Activated B cell treated with CpG ODN at 0.5 μM for 24 hours (primary cell): ENCODE measurements at regions of chr9 and their contacts with region 1.

Region 1: DNA sequence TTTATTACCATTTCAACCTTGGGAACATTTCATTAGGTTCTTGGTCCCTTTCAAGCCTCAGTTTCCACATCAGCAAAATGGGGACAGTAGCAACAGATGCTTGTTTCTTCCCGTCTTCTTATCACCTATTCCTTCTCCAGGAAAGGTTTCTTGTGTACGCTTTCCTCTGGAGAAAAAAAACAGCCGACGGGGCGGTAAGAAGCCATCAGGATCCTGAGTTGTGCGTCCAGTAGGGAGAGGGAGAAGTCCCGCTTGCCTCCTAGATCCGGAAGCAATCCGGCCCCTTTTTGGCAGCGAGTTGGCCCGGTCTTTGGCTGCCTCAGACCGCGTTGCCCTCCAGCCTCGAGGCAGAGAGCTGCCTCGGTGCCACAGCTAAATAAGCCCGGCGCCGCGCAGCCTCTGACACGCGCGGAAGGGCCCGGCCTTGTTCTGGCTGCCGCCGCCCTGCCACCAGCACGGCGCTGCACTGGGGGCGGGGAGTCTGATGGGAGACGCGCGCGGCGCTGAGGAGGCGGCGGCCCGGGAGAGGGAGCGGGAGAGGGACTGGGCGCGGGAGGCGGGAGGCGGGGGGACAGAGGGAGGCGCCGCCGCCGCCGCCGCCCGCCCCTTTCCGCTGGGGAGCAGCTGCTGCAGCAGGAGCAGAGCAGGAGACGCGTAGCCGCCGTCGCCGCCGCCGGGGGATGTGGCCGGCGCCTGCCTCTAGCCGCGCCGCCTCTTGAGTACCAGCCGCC is at the start of gene SLC44A1:
- DNase-seq: peak; percentile 86
- ATAC-seq: peak; percentile 82
- H3K4me3 Mint-ChIP-seq: peak within 1 kb of the TSS; percentile 92
- H3K27ac Mint-ChIP-seq: peak within 1 kb of the TSS; percentile 84
- H3K4me1 Mint-ChIP-seq: peaks cover 29% of the 10 kb centered on the region
- H3K27me3 Mint-ChIP-seq: peaks cover 8% of the 10 kb centered on the region
- CTCF ChIP-seq: no peak
- total RNA-seq, gene SLC44A1: 9.5 and 10.1 TPM in 2 replicates

Region 2: DNA sequence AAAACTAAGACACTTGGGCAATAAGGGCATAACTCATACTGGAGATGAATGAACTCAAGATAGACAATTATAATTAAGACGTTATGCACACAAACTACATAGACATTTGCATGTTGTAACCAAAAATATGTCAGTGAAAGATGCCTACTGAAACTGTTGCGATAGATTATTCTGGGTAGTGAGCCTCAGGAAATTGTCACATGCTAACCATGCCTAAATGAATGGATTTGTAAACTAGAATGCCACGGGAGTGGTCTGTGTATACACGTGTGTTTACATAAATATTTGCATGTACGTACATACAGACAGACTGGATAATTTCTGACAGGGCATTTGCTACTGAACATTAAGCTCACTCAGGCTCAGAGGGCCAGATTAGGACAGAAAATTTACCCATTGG is 479.0 kb before region 1 on chr9:
- CTCF ChIA-PET with region 1: no interaction called
- POLR2A ChIA-PET with region 1: no interaction called
- intact Hi-C with region 1: loop called (anchors 5 kb)
- DNase-seq: no peak
- ATAC-seq: peak; percentile 8
- H3K4me3 Mint-ChIP-seq: peak overlapping the region; percentile 90
- H3K27ac Mint-ChIP-seq: peak overlapping the region; percentile 90
- H3K4me1 Mint-ChIP-seq: peaks cover 44% of the 10 kb centered on the region
- H3K27me3 Mint-ChIP-seq: no peaks in the 10 kb centered on the region
- CTCF ChIP-seq: no peak

Region 3: GRCh38 chr9:104863180-104863883 is 380.8 kb before region 1 on chr9:
- CTCF ChIA-PET with region 1: interaction called, 4 read pairs
- POLR2A ChIA-PET with region 1: no interaction called
- intact Hi-C with region 1: loop called (anchors 5 kb)
- DNase-seq: no peak
- ATAC-seq: peak; percentile 74
- H3K4me3 Mint-ChIP-seq: no peak overlapping the region
- H3K27ac Mint-ChIP-seq: no peak overlapping the region
- H3K4me1 Mint-ChIP-seq: peaks cover 53% of the 10 kb centered on the region
- H3K27me3 Mint-ChIP-seq: no peaks in the 10 kb centered on the region
- CTCF ChIP-seq: no peak

Region 4: GRCh38 chr9:104968025-104968982 is 275.9 kb before region 1 on chr9:
- CTCF ChIA-PET with region 1: no interaction called
- POLR2A ChIA-PET with region 1: interaction called, 3 read pairs
- intact Hi-C with region 1: loop called (anchors 1 kb)
- DNase-seq: peak; percentile 91
- ATAC-seq: peak; percentile 99
- H3K4me3 Mint-ChIP-seq: peak overlapping the region; percentile 94
- H3K27ac Mint-ChIP-seq: peak overlapping the region; percentile 20
- H3K4me1 Mint-ChIP-seq: peaks cover 10% of the 10 kb centered on the region
- H3K27me3 Mint-ChIP-seq: peaks cover 15% of the 10 kb centered on the region
- CTCF ChIP-seq: no peak

Region 5: GRCh38 chr9:104982543-104982942 is 261.6 kb before region 1 on chr9:
- CTCF ChIA-PET with region 1: no interaction called
- POLR2A ChIA-PET with region 1: no interaction called
- intact Hi-C with region 1: no loop called
- DNase-seq: no peak
- ATAC-seq: no peak
- H3K4me3 Mint-ChIP-seq: no peak overlapping the region
- H3K27ac Mint-ChIP-seq: no peak overlapping the region
- H3K4me1 Mint-ChIP-seq: peaks cover 4% of the 10 kb centered on the region
- H3K27me3 Mint-ChIP-seq: no peaks in the 10 kb centered on the region
- CTCF ChIP-seq: no peak

Region 6: GRCh38 chr9:105318729-105319191 is 74.6 kb after region 1 on chr9:
- CTCF ChIA-PET with region 1: no interaction called
- POLR2A ChIA-PET with region 1: interaction called, 3 read pairs
- intact Hi-C with region 1: loop called (anchors 5 kb)
- DNase-seq: no peak
- ATAC-seq: peak; percentile 50
- H3K4me3 Mint-ChIP-seq: no peak overlapping the region
- H3K27ac Mint-ChIP-seq: no peak overlapping the region
- H3K4me1 Mint-ChIP-seq: peaks cover 12% of the 10 kb centered on the region
- H3K27me3 Mint-ChIP-seq: no peaks in the 10 kb centered on the region
- CTCF ChIP-seq: no peak

Region 7: GRCh38 chr9:105414947-105415661 is 170.9 kb after region 1 on chr9:
- CTCF ChIA-PET with region 1: interaction called, 3 read pairs
- POLR2A ChIA-PET with region 1: no interaction called
- intact Hi-C with region 1: loop called (anchors 10 kb)
- DNase-seq: peak; percentile 18
- ATAC-seq: peak; percentile 85
- H3K4me3 Mint-ChIP-seq: no peak overlapping the region
- H3K27ac Mint-ChIP-seq: no peak overlapping the region
- H3K4me1 Mint-ChIP-seq: peaks cover 4% of the 10 kb centered on the region
- H3K27me3 Mint-ChIP-seq: no peaks in the 10 kb centered on the region
- CTCF ChIP-seq: no peak

Region 8: GRCh38 chr9:105557771-105558610 is 313.8 kb after region 1 on chr9 and contains the start of gene FKTN:
- CTCF ChIA-PET with region 1: no interaction called
- POLR2A ChIA-PET with region 1: no interaction called
- intact Hi-C with region 1: loop called (anchors 2 kb)
- DNase-seq: peak; percentile 72
- ATAC-seq: peak; percentile 99
- H3K4me3 Mint-ChIP-seq: peak within 1 kb of the TSS; percentile 96
- H3K27ac Mint-ChIP-seq: peak within 1 kb of the TSS; percentile 83
- H3K4me1 Mint-ChIP-seq: peaks cover 20% of the 10 kb centered on the region
- H3K27me3 Mint-ChIP-seq: no peaks in the 10 kb centered on the region
- CTCF ChIP-seq: no peak
- total RNA-seq, gene FKTN: 16.8 and 17.5 TPM in 2 replicates